ENCODE measurements at regions of chr19 and their contacts with region 1.

Region 1: GRCh38 chr19:49451430-49452181 is at the start of gene PIH1D1:
- DNase-seq: peak; percentile 100
- H3K4me3 Mint-ChIP-seq: peak within 1 kb of the TSS; percentile 96
- H3K27ac Mint-ChIP-seq: peak within 1 kb of the TSS; percentile 100
- H3K4me1 Mint-ChIP-seq: peaks cover 16% of the 10 kb centered on the region
- H3K27me3 Mint-ChIP-seq: no peaks in the 10 kb centered on the region
- CTCF ChIP-seq: no peak
- total RNA-seq, gene PIH1D1: 86.3 and 116 TPM in 2 replicates

Region 2: DNA sequence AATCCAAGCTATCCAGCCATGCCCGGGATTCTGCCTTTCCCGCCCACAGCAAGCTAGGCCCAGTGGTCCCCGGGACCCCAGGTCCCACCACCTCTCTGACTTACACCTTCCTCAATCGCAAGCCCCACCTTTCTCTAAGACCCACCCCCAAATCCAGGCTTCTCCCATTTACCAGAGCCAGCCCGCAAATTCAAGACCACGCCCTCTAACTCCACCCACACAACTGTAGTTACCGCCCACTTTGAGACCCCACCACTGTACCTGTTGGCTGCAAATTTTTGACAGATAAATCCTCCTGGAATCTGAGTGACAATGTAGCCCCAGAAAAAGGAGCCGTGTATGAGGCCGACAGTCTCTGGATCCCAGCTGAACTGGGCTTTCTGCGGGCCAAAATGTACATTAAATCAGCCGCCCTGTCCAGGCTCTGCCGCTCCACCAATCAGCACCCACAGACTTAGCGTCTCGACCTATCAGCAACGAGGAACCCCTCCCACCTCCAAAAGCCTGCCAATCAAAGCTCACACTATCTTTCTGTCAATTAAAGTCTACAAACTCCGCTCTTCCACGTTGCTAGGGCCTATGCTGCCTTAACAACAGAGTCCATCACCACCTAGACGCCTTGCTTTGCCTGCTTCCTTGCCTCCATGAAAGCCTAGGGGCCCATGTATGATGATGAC is 16.6 kb before region 1 on chr19:
- CTCF ChIA-PET with region 1: no interaction called
- POLR2A ChIA-PET with region 1: no interaction called
- intact Hi-C with region 1: no loop called
- DNase-seq: no peak
- H3K4me3 Mint-ChIP-seq: no peak overlapping the region
- H3K27ac Mint-ChIP-seq: no peak overlapping the region
- H3K4me1 Mint-ChIP-seq: no peaks in the 10 kb centered on the region
- H3K27me3 Mint-ChIP-seq: peaks cover 49% of the 10 kb centered on the region
- CTCF ChIP-seq: no peak

Region 3: DNA sequence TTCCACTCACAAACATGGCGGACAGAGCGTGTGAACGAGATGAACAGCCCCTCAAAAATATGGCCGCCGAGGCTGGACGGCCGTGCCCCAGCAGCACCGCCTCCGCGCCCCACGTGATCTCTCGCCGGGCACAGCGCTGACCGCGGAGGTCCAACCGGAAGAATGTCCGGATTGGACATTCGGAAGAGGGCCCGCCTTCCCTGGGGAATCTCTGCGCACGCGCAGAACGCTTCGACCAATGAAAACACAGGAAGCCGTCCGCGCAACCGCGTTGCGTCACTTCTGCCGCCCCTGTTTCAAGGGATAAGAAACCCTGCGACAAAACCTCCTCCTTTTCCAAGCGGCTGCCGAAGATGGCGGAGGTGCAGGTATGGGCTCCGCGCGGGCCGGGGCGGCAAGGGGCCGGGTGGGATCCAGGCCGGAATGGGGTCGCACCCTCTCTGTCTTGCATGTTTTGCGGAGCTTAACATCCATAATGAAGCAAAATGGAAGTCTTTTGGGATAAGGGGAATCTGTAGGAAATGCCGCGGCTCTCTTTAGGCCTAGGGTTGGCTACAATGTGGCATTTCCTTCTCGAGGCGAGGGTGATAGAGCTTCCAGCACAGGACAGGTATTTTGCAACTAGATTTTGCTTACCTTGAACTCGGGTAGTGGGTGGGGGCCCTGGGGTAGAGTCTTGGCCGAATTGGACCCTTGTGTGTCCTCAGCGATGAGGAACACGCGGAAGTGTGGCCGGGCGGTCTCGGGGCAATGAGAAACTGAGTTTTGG is 35.9 kb after region 1 on chr19 and contains the start of gene RPL13A:
- CTCF ChIA-PET with region 1: no interaction called
- POLR2A ChIA-PET with region 1: interaction called, 37 read pairs
- intact Hi-C with region 1: loop called (anchors 5 kb)
- DNase-seq: peak; percentile 100
- H3K4me3 Mint-ChIP-seq: peak within 1 kb of the TSS; percentile 95
- H3K27ac Mint-ChIP-seq: peak within 1 kb of the TSS; percentile 99
- H3K4me1 Mint-ChIP-seq: no peaks in the 10 kb centered on the region
- H3K27me3 Mint-ChIP-seq: no peaks in the 10 kb centered on the region
- CTCF ChIP-seq: no peak
- total RNA-seq, gene RPL13A: 3,716 and 3,819 TPM in 2 replicates

Region 4: GRCh38 chr19:49497047-49497788 is 45.6 kb after region 1 on chr19:
- CTCF ChIA-PET with region 1: interaction called, 3 read pairs
- POLR2A ChIA-PET with region 1: interaction called, 43 read pairs
- intact Hi-C with region 1: no loop called
- DNase-seq: peak; percentile 68
- H3K4me3 Mint-ChIP-seq: peak overlapping the region; percentile 91
- H3K27ac Mint-ChIP-seq: peak overlapping the region; percentile 97
- H3K4me1 Mint-ChIP-seq: peaks cover 6% of the 10 kb centered on the region
- H3K27me3 Mint-ChIP-seq: no peaks in the 10 kb centered on the region
- CTCF ChIP-seq: no peak

Region 5: GRCh38 chr19:49690656-49691242 is 239.1 kb after region 1 on chr19 and contains the start of gene CPT1C:
- CTCF ChIA-PET with region 1: no interaction called
- POLR2A ChIA-PET with region 1: no interaction called
- intact Hi-C with region 1: no loop called
- DNase-seq: peak; percentile 52
- H3K4me3 Mint-ChIP-seq: peak within 1 kb of the TSS; percentile 56
- H3K27ac Mint-ChIP-seq: no peak within 1 kb of the TSS
- H3K4me1 Mint-ChIP-seq: peaks cover 14% of the 10 kb centered on the region
- H3K27me3 Mint-ChIP-seq: no peaks in the 10 kb centered on the region
- CTCF ChIP-seq: no peak
- total RNA-seq, gene CPT1C: not detected in 2 replicates